Naive thymus-derived CD4-positive, alpha-beta T cell (primary cell): ENCODE measurements at regions of chr9 and their contacts with region 1.

Region 1: GRCh38 chr9:130042833-130043653 is at the start of gene FNBP1:
- DNase-seq: peak; percentile 75 to 89 (median 84)
- ATAC-seq: peak; percentile 87
- H3K4me3 ChIP-seq: peak within 1 kb of the TSS; percentile 89
- H3K4me3 Mint-ChIP-seq: peak within 1 kb of the TSS; percentile 94 to 100 (median 99)
- H3K27ac ChIP-seq: peak within 1 kb of the TSS; percentile 96
- H3K27ac Mint-ChIP-seq: peak within 1 kb of the TSS; percentile 96 to 99 (median 98)
- H3K4me1 ChIP-seq: peaks cover 31 to 36% of the 10 kb centered on the region in 2 donors
- H3K4me1 Mint-ChIP-seq: peaks cover 32 to 68% (median 53%) of the 10 kb centered on the region in 7 donors
- H3K27me3 ChIP-seq: no peaks in the 10 kb centered on the region
- H3K27me3 Mint-ChIP-seq: peaks cover 0 to 5% (median 0%) of the 10 kb centered on the region in 5 donors
- total RNA-seq, gene FNBP1: 160 to 207 (median 174) TPM

Region 2: DNA sequence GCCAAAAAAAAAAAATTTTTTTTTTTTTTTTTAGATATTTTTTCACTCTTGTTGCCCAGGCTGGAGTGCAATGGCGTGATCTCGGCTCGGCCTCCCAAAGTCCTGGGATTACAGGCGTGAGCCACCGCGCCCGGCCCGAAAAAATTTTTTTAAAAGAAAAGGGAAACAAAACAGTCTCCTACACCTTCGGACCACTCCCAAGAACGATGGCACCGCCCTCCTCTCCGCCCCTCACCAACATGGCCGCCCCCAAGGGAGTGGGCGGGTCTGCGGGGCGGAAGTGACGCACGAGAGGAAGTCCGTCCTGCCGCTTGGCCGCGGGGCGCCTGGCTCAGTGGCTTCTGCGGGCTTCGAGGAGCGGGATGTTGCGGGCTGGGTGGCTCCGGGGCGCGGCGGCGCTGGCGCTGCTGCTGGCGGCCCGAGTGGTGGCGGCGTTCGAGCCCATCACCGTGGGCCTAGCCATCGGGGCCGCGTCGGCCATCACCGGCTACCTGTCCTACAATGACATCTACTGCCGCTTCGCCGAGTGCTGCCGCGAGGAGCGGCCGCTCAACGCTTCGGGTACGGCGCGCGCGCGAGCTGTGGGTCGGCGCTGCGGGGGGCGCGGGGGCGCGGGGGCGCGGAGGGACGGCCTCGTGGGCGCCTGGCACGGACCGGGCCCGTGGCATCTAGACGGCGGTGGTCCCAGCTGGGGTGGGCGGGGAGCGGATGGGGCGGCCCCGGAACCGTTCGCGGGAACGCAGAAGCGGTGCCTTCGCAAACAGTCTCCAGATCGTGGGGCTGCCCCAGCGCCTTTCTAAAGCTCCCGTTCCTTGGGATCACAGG is 240.0 kb before region 1 on chr9 and contains the start of gene TOR1B:
- CTCF ChIA-PET with region 1: no interaction called
- POLR2A ChIA-PET with region 1: no interaction called
- intact Hi-C with region 1: loop called in 1 of 2 experiments (anchors 2 kb)
- DNase-seq: peak; percentile 91 to 97 (median 94)
- ATAC-seq: peak; percentile 97
- H3K4me3 ChIP-seq: peak within 1 kb of the TSS; percentile 73
- H3K4me3 Mint-ChIP-seq: peak within 1 kb of the TSS; percentile 87 to 95 (median 90)
- H3K27ac ChIP-seq: peak within 1 kb of the TSS; percentile 79
- H3K27ac Mint-ChIP-seq: peak within 1 kb of the TSS; percentile 85 to 97 (median 94)
- H3K4me1 ChIP-seq: peaks cover 12 to 20% of the 10 kb centered on the region in 2 donors
- H3K4me1 Mint-ChIP-seq: peaks cover 15 to 34% (median 28%) of the 10 kb centered on the region in 7 donors
- H3K27me3 ChIP-seq: no peaks in the 10 kb centered on the region
- H3K27me3 Mint-ChIP-seq: no peaks in the 10 kb centered on the region
- total RNA-seq, gene TOR1B: 16.2 to 30.9 (median 23.9) TPM

Region 3: GRCh38 chr9:129932303-129933151 is 110.5 kb before region 1 on chr9:
- CTCF ChIA-PET with region 1: no interaction called
- POLR2A ChIA-PET with region 1: interaction called, 10 read pairs
- intact Hi-C with region 1: no loop called
- DNase-seq: no peak
- ATAC-seq: peak; percentile 54
- H3K4me3 ChIP-seq: peak overlapping the region; percentile 24
- H3K4me3 Mint-ChIP-seq: peak overlapping the region; percentile 36 to 79 (median 68)
- H3K27ac ChIP-seq: peak overlapping the region; percentile 31
- H3K27ac Mint-ChIP-seq: peak overlapping the region; percentile 60 to 95 (median 85)
- H3K4me1 ChIP-seq: peaks cover 20 to 35% of the 10 kb centered on the region in 2 donors
- H3K4me1 Mint-ChIP-seq: peaks cover 31 to 61% (median 56%) of the 10 kb centered on the region in 7 donors
- H3K27me3 ChIP-seq: no peaks in the 10 kb centered on the region
- H3K27me3 Mint-ChIP-seq: no peaks in the 10 kb centered on the region

Region 4: DNA sequence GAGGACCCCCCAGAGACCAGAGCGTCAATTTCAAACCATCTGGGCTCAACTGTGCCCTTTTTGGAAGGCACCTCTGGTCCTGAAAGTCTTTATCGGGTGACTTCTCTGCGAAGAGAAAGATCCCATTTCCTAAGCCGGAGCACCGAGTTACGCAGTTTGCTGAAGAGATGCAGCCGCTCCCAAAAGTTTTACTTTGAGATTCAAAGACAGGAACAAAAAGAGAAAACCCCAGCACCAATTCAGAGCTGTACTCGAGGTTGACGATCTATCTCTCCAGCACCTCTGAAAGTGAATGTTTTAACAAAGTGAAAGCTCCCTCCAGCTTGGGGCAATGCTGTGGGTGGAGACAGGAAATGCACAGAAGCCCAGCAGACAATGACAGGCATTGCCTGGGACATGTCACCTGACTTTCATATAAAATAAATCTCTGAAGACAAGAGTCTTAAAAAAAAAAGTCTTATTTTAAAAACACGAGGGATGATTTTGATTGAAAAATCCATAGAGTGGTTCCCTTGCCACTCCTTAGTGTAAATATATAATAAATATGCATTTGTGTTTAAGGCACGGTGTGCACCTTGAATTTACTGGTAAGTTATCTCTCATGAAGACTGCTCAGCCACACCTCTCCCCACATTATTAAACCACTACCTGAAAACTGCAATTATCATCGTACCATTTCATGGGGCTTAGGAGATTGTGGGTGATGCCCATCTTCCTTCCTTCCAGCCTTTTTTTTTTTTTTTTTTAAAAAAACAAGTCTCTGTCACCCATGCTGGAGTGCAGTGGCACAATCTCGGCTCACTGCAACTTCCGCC is 79.9 kb before region 1 on chr9:
- CTCF ChIA-PET with region 1: no interaction called
- POLR2A ChIA-PET with region 1: interaction called, 18 read pairs
- intact Hi-C with region 1: loop called (anchors 1 kb)
- DNase-seq: peak; percentile 23 to 92 (median 87)
- ATAC-seq: peak; percentile 98
- H3K4me3 ChIP-seq: peak overlapping the region; percentile 80
- H3K4me3 Mint-ChIP-seq: peak overlapping the region; percentile 66 to 95 (median 88)
- H3K27ac ChIP-seq: peak overlapping the region; percentile 92
- H3K27ac Mint-ChIP-seq: peak overlapping the region; percentile 89 to 99 (median 97)
- H3K4me1 ChIP-seq: peaks cover 34 to 47% of the 10 kb centered on the region in 2 donors
- H3K4me1 Mint-ChIP-seq: peaks cover 54 to 80% (median 67%) of the 10 kb centered on the region in 7 donors
- H3K27me3 ChIP-seq: no peaks in the 10 kb centered on the region
- H3K27me3 Mint-ChIP-seq: no peaks in the 10 kb centered on the region

Region 5: GRCh38 chr9:130029223-130029973 is 13.6 kb before region 1 on chr9:
- CTCF ChIA-PET with region 1: interaction called, 6 read pairs
- POLR2A ChIA-PET with region 1: interaction called, 45 read pairs
- intact Hi-C with region 1: loop called in 1 of 2 experiments (anchors 2 kb)
- DNase-seq: no peak
- ATAC-seq: no peak
- H3K4me3 ChIP-seq: peak overlapping the region; percentile 21
- H3K4me3 Mint-ChIP-seq: peak overlapping the region; percentile 58 to 89 (median 74)
- H3K27ac ChIP-seq: peak overlapping the region; percentile 63
- H3K27ac Mint-ChIP-seq: peak overlapping the region; percentile 47 to 98 (median 77)
- H3K4me1 ChIP-seq: peaks cover 66 to 93% of the 10 kb centered on the region in 2 donors
- H3K4me1 Mint-ChIP-seq: peaks cover 60 to 95% (median 88%) of the 10 kb centered on the region in 7 donors
- H3K27me3 ChIP-seq: no peaks in the 10 kb centered on the region
- H3K27me3 Mint-ChIP-seq: no peaks in the 10 kb centered on the region

Region 6: DNA sequence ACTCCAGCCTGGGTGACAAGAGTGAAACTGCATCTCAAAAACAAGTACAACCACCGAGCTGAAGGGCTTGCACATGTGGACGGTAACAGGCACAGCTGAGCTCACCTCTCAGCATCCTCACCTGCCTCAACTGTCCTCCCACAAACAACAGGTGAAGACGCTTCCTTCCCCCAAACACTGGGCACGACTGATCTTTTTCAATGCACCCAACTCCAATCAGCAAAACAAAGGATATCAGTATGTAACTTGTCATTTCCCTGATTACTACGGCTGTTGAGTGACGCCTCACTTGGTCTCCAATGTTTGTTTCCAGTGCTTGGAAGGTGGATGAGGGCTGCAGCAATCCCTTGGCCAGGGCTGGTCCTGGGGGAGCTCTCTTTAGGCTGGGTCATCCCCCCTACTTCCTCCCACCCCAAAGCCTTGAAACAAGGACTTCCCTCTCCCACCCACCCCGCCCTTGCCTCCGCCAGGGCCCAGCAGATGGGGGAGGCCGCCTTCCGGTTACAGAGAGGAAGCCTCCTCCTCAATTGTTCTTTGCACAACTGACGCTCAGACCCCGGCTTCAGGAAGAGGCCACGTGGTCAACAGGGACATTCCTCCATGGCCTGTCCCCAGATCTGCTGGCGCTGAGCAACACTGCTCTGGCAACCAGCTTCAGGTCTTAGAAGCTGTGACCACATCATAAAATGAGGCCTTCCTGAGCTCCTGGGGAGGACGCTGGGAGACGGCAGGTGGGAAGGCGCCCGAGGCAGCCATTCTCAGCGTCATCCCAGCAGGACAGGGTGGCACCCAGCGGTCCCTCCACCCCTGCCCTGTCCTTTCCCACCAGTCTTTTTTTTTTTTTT is 1227.3 kb after region 1 on chr9:
- CTCF ChIA-PET with region 1: no interaction called
- POLR2A ChIA-PET with region 1: no interaction called
- intact Hi-C with region 1: loop called in 1 of 2 experiments (anchors 10 kb)
- DNase-seq: peak in 8 of 9 donors; percentile 49 to 70 (median 64)
- ATAC-seq: peak; percentile 16
- H3K4me3 ChIP-seq: peak overlapping the region; percentile 74
- H3K4me3 Mint-ChIP-seq: peak overlapping the region; percentile 83 to 100 (median 92)
- H3K27ac ChIP-seq: peak overlapping the region; percentile 96
- H3K27ac Mint-ChIP-seq: peak overlapping the region; percentile 95 to 100 (median 99)
- H3K4me1 ChIP-seq: peaks cover 50 to 63% of the 10 kb centered on the region in 2 donors
- H3K4me1 Mint-ChIP-seq: peaks cover 30 to 61% (median 50%) of the 10 kb centered on the region in 7 donors
- H3K27me3 ChIP-seq: no peaks in the 10 kb centered on the region
- H3K27me3 Mint-ChIP-seq: no peaks in the 10 kb centered on the region